PC-9 (cell line): ENCODE measurements at regions of chr1 and their contacts with region 1.

Region 1: DNA sequence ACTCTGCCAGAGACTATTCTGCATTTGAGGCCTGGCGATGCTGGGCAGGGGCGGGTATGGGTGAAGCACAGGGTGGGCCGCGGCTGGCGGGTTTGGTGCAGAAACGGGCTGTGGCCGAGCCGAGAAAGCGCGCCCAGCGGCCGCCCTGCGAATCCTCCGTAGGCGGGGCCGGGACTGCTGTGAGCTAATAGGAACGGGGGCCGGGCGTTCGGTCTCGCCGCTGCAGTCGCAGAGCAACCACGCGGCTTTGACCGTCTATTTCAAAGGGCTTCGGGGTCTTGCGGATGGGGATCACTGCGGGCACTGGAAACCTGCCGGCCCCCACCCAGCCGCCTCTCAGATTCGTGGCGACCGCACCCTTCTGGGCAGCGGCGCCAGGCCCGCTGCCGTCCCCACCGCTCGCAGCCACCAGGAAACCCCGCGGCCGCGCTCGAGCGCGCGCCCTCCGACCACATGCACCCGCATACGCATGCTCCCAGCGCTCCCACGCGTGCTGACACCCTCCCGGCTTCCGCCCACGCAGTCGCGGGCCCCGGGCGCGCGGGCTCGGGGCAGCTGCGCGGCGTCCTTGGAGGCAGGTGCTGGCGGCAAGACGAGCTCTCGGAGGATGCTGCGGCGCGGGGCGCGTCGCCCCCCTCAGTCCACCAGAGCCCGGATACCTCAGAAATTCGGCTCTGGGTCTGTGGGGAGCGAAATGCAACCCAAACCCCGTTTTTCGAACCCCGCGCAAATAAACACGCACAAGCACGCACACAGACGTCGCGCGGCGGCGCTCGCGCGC is 32.6 kb downstream of the DNTTIP2 start:
- DNase-seq: peak; percentile 77 to 81
- H3K4me3 ChIP-seq: peak overlapping the region; percentile 94
- H3K27ac ChIP-seq: peak overlapping the region; percentile 81
- H3K4me1 ChIP-seq: peaks cover 36% of the 10 kb centered on the region
- H3K27me3 ChIP-seq: no peaks in the 10 kb centered on the region
- CTCF ChIP-seq: peak; percentile 37; the same call in 1 of the 2 replicates

Region 2: DNA sequence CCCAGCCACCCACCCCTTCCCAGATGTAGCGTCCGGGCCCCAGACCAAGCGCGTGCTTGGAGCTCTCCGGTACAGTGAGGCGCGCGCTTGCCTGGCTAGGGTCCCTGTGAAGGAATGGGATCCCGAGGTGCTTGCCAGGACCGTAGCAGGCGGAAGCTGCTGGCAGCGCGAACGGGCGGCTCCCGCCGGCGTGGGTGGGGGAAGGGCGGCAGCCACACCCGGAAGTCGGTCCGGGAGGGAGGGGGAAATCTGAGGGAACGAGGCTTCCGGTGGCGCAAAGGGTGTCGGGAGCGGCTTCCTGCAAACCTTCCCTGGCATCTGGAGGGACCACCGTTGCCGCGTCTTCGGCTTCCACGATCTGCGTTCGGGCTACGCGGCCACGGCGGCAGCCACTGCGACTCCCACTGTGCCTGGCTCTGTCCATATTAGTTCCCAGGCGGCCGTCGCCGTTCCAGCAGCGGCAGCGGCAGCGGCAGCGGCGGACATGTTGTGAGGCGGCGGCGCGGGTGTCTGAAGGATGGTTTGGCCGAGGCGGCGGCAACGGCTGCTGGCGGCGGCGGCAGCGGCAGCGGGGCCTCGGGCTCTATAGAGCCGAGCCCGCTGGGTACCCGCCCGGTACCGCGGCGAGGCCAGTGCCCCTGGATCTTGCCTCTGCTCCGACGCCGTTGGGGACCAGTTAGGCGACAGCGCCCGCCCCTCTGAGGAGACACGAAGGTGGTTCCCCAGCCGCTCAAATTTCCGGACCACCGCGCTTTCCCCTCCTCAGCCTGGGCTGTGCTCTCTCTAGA is 500.6 kb before region 1 on chr1 and contains the start of gene DR1:
- CTCF ChIA-PET with region 1: no interaction called
- POLR2A ChIA-PET with region 1: no interaction called
- intact Hi-C with region 1: loop called (anchors 5 kb)
- DNase-seq: peak; percentile 84 to 94
- H3K4me3 ChIP-seq: peak within 1 kb of the TSS; percentile 86
- H3K27ac ChIP-seq: peak within 1 kb of the TSS; percentile 86
- H3K4me1 ChIP-seq: peaks cover 35% of the 10 kb centered on the region
- H3K27me3 ChIP-seq: no peaks in the 10 kb centered on the region
- CTCF ChIP-seq: no peak
- total RNA-seq, gene DR1: 33.6 and 37.8 TPM in 2 replicates

Region 3: GRCh38 chr1:93447516-93448291 is 398.7 kb before region 1 on chr1 and contains the start of gene FNBP1L:
- CTCF ChIA-PET with region 1: interaction called, 3 read pairs
- POLR2A ChIA-PET with region 1: interaction called, 3 read pairs
- intact Hi-C with region 1: loop called (anchors 1 kb)
- DNase-seq: peak; percentile 76 to 86
- H3K4me3 ChIP-seq: peak within 1 kb of the TSS; percentile 90
- H3K27ac ChIP-seq: peak within 1 kb of the TSS; percentile 44
- H3K4me1 ChIP-seq: peaks cover 28% of the 10 kb centered on the region
- H3K27me3 ChIP-seq: no peaks in the 10 kb centered on the region
- CTCF ChIP-seq: no peak
- total RNA-seq, gene FNBP1L: 34.1 and 34.3 TPM in 2 replicates

Region 4: DNA sequence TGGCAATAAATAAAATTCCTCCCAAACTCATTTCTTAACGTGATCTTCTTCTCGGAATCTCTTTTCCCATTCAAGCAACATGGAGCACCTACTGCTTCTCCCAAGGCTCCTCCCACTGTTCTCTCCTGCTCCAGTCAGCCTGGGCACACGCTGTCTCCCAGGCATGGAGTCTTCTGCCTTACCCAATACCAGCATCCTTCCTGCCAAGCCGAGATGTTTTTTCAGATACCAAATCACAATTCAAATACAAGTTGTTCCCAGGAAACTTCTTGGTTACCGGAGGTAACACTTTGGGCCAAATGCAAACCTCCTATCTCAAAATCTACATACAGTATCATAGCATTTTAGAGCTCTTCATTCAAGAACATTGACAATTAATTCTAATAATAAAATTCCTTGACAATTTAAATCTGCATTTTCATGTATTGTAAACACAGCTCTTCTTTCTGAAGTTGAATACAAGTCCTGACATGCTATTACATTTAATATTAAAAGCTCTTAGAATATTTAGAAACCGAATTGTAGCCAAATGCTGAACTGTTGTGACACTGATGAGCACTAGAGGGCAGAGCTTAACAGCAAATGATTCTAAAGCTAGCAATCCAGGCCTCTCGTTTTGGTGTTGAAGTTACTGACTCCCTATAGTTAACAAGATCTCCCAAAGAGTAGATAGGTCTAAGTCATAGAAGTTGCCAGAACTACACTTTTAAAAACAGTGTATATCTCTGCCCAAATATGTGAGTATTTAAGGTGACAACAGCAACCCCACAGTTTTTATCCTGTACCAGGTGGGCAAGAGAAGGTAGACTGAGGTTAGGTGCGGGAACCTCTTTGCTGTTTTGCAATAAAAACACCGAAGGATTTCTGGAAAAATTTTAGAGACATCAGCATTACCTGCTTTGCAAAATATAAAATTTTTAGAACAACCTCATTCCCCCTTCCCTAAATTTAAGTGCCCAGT is 217.0 kb before region 1 on chr1:
- CTCF ChIA-PET with region 1: interaction called, 20 read pairs
- POLR2A ChIA-PET with region 1: no interaction called
- intact Hi-C with region 1: loop called (anchors 1 kb)
- DNase-seq: peak; percentile 44 to 74
- H3K4me3 ChIP-seq: no peak overlapping the region
- H3K27ac ChIP-seq: peak overlapping the region; percentile 22
- H3K4me1 ChIP-seq: peaks cover 91% of the 10 kb centered on the region
- H3K27me3 ChIP-seq: no peaks in the 10 kb centered on the region
- CTCF ChIP-seq: peak; percentile 98

Region 5: GRCh38 chr1:93779540-93780192 is 66.7 kb before region 1 on chr1:
- CTCF ChIA-PET with region 1: no interaction called
- POLR2A ChIA-PET with region 1: no interaction called
- intact Hi-C with region 1: loop called (anchors 2 kb)
- DNase-seq: peak; percentile 93 to 100
- H3K4me3 ChIP-seq: peak overlapping the region; percentile 15; the same call in 1 of the 2 replicates
- H3K27ac ChIP-seq: peak overlapping the region; percentile 95
- H3K4me1 ChIP-seq: peaks cover 77% of the 10 kb centered on the region
- H3K27me3 ChIP-seq: no peaks in the 10 kb centered on the region
- CTCF ChIP-seq: peak; percentile 31; the same call in 1 of the 2 replicates